MCF 10A (cell line): ENCODE measurements at regions of chr17 and their contacts with region 1.

Region 1: GRCh38 chr17:37489197-37490001 is at the start of gene DUSP14:
- DNase-seq: peak; percentile 80
- H3K4me3 Mint-ChIP-seq: peak within 1 kb of the TSS; percentile 92
- H3K27ac Mint-ChIP-seq: peak within 1 kb of the TSS; percentile 79
- H3K4me1 Mint-ChIP-seq: peaks cover 33% of the 10 kb centered on the region
- H3K27me3 Mint-ChIP-seq: no peaks in the 10 kb centered on the region
- CTCF ChIP-seq: no peak
- total RNA-seq, gene DUSP14: 31.7 and 39.4 TPM in 2 replicates

Region 2: DNA sequence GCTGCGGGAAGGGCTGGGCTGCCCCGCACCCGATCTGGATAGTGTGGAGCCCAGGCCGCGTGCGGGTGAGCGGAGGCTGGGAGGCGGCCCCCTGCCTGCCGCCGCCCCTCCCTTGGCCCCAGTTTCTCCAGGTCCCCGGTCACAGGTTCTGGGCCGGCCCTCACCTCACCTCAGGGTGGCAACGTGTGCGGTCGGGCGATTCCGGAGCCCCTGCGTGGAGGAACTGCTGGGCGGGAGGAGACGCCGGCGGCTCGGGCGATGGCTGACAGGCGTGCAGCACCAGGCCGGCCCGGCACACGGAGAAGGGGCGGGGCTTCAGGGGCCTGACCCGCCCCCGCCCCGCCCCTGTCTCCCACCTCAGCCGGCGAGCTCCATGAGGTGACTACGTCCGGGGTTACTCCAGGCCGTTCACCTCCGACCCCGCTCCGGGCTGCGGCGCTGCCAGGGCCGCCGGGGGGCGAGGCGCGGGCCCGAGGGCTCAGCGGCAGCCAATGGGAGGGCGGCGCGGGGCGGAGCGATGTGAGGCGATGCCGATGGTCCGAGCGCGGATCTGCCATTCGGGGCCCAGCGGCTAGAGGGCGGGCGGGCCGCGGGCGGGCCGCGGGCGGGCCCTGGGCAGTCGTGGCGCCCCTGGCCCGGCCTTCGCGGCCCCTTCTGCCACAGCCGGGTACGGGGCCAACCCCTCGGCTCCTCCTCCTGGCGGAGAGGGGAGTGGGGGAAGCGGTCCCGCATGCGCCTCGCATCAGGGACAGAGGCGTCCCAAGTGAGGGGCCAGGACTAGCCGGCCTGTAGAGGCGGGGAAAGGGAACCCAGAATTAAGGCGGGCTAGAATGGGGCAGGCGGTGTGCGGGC is 130.3 kb before region 1 on chr17:
- CTCF ChIA-PET with region 1: interaction called, 5 read pairs
- POLR2A ChIA-PET with region 1: interaction called, 27 read pairs
- intact Hi-C with region 1: no loop called
- DNase-seq: peak; percentile 96
- H3K4me3 Mint-ChIP-seq: peak overlapping the region; percentile 94
- H3K27ac Mint-ChIP-seq: peak overlapping the region; percentile 73
- H3K4me1 Mint-ChIP-seq: peaks cover 31% of the 10 kb centered on the region
- H3K27me3 Mint-ChIP-seq: no peaks in the 10 kb centered on the region
- CTCF ChIP-seq: peak; percentile 23

Region 3: GRCh38 chr17:37406635-37407461 is 82.6 kb before region 1 on chr17 and contains the starts of genes ACACA and TADA2A:
- CTCF ChIA-PET with region 1: no interaction called
- POLR2A ChIA-PET with region 1: interaction called, 63 read pairs
- intact Hi-C with region 1: loop called (anchors 2 kb)
- DNase-seq: peak; percentile 81
- H3K4me3 Mint-ChIP-seq: peak within 1 kb of the TSS; percentile 95
- H3K27ac Mint-ChIP-seq: peak within 1 kb of the TSS; percentile 52
- H3K4me1 Mint-ChIP-seq: peaks cover 10% of the 10 kb centered on the region
- H3K27me3 Mint-ChIP-seq: no peaks in the 10 kb centered on the region
- CTCF ChIP-seq: no peak
- total RNA-seq, gene ACACA: 88.6 and 100 TPM in 2 replicates
- total RNA-seq, gene TADA2A: 25.3 and 31.3 TPM in 2 replicates

Region 4: GRCh38 chr17:37430051-37430627 is 59.3 kb before region 1 on chr17:
- CTCF ChIA-PET with region 1: interaction called, 3 read pairs
- POLR2A ChIA-PET with region 1: interaction called, 130 read pairs
- intact Hi-C with region 1: no loop called
- DNase-seq: peak; percentile 59
- H3K4me3 Mint-ChIP-seq: peak overlapping the region; percentile 17
- H3K27ac Mint-ChIP-seq: peak overlapping the region; percentile 88
- H3K4me1 Mint-ChIP-seq: peaks cover 10% of the 10 kb centered on the region
- H3K27me3 Mint-ChIP-seq: no peaks in the 10 kb centered on the region
- CTCF ChIP-seq: no peak

Region 5: GRCh38 chr17:37447641-37448040 is 41.8 kb before region 1 on chr17:
- CTCF ChIA-PET with region 1: interaction called, 3 read pairs
- POLR2A ChIA-PET with region 1: interaction called, 47 read pairs
- intact Hi-C with region 1: loop called (anchors 5 kb)
- DNase-seq: peak; percentile 29
- H3K4me3 Mint-ChIP-seq: no peak overlapping the region
- H3K27ac Mint-ChIP-seq: peak overlapping the region; percentile 33
- H3K4me1 Mint-ChIP-seq: peaks cover 22% of the 10 kb centered on the region
- H3K27me3 Mint-ChIP-seq: no peaks in the 10 kb centered on the region
- CTCF ChIP-seq: no peak

Region 6: DNA sequence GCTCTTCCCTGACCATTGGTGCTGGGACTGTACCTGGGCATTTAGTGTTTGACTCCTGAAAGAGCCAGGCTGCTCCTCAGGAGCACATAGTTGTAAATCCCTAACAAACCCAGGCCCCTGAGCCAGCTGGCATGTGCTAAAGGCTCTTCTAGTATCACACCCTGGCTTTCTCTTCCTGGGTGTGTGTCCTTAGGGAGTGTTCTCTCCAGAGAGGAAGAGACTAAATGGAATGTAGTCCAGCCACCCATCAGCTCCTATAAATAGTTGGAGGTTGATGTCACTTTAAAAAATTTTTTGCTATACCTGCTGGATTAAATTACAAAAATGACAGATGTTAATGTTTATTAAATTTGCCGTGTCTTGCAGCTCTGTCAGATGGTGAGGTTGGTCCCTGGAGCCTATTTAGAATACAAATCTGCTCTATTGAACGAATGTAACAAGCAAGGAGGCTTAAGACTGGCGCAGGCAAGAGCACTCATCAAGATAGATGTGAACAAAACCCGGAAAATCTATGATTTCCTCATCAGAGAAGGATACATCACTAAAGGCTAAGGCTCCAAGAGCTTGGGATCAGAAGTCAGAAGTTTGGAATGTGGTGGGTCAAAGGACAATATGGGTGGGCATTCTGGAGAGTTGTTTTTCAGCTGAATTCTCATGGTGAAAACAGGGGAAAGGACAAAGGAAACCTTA is 12.8 kb before region 1 on chr17:
- CTCF ChIA-PET with region 1: interaction called, 4 read pairs
- POLR2A ChIA-PET with region 1: interaction called, 60 read pairs
- intact Hi-C with region 1: no loop called
- DNase-seq: no peak
- H3K4me3 Mint-ChIP-seq: no peak overlapping the region
- H3K27ac Mint-ChIP-seq: peak overlapping the region; percentile 75
- H3K4me1 Mint-ChIP-seq: peaks cover 27% of the 10 kb centered on the region
- H3K27me3 Mint-ChIP-seq: no peaks in the 10 kb centered on the region
- CTCF ChIP-seq: no peak

Region 7: DNA sequence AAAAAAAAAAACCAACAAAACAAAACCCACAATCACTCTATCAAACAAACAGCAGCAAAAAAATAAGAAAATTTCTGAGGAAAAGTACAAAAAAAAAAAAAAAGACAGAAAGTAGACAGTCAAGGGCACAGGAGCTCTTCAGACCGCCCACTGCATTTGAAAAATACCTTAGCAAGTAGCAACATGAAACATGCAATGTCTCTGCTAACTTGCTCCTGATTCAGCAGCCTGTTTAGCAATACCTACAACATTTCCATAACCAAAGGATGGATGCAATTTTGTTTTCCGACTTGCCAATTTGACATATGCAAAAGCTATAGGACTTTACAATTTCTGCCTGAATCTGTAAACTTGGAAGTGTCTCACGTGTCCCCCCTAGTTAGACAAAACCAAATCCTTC is 62.4 kb after region 1 on chr17:
- CTCF ChIA-PET with region 1: no interaction called
- POLR2A ChIA-PET with region 1: interaction called, 10 read pairs
- intact Hi-C with region 1: no loop called
- DNase-seq: peak; percentile 74
- H3K4me3 Mint-ChIP-seq: peak overlapping the region; percentile 14
- H3K27ac Mint-ChIP-seq: peak overlapping the region; percentile 2
- H3K4me1 Mint-ChIP-seq: peaks cover 20% of the 10 kb centered on the region
- H3K27me3 Mint-ChIP-seq: no peaks in the 10 kb centered on the region
- CTCF ChIP-seq: no peak